B cell (primary cell): ENCODE measurements at regions of chr5 and their contacts with region 1.

Region 1: DNA sequence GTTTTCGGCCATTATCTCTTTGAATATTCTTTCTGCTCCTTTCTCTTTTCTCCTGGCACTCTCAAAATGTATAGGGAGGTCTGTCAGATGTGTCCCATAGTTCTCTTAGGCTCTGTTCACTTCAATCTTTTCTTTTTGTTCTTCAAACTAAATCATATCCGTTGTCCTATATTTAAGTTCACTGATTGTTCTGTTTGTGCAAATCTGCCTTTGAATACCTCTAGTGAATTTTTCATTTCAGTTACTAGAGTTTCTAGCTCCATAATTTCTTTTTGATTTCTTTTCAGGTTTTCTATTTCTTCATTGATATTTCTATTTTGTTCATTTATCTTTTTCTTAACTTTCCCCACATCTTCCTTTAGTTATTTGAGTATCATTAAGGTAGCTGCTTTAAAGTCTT is 65.4 kb downstream of the CERT1 start:
- DNase-seq: no peak
- ATAC-seq: no peak
- H3K4me3 ChIP-seq: no peak overlapping the region
- H3K4me3 Mint-ChIP-seq: no peak overlapping the region
- H3K27ac ChIP-seq: no peak overlapping the region
- H3K27ac Mint-ChIP-seq: no peak overlapping the region
- H3K4me1 ChIP-seq: no peaks in the 10 kb centered on the region
- H3K4me1 Mint-ChIP-seq: no peaks in the 10 kb centered on the region
- H3K27me3 ChIP-seq: no peaks in the 10 kb centered on the region
- H3K27me3 Mint-ChIP-seq: no peaks in the 10 kb centered on the region
- CTCF ChIP-seq: no peak

Region 2: GRCh38 chr5:75574791-75575190 is 128.7 kb after region 1 on chr5:
- CTCF ChIA-PET with region 1: no interaction called
- POLR2A ChIA-PET with region 1: no interaction called
- intact Hi-C with region 1: loop called (anchors 10 kb)
- DNase-seq: peak; percentile 7
- ATAC-seq: no peak
- H3K4me3 ChIP-seq: peak overlapping the region in 1 of 5 experiments; percentile 39
- H3K4me3 Mint-ChIP-seq: peak overlapping the region; percentile 78
- H3K27ac ChIP-seq: peak overlapping the region; percentile 16 to 65
- H3K27ac Mint-ChIP-seq: peak overlapping the region; percentile 60
- H3K4me1 ChIP-seq: peaks cover 18 to 23% of the 10 kb centered on the region in 2 donors
- H3K4me1 Mint-ChIP-seq: peaks cover 33% of the 10 kb centered on the region
- H3K27me3 ChIP-seq: no peaks in the 10 kb centered on the region
- H3K27me3 Mint-ChIP-seq: no peaks in the 10 kb centered on the region
- CTCF ChIP-seq: no peak